ENCODE measurements at regions of chr4 and their contacts with region 1.

Region 1: DNA sequence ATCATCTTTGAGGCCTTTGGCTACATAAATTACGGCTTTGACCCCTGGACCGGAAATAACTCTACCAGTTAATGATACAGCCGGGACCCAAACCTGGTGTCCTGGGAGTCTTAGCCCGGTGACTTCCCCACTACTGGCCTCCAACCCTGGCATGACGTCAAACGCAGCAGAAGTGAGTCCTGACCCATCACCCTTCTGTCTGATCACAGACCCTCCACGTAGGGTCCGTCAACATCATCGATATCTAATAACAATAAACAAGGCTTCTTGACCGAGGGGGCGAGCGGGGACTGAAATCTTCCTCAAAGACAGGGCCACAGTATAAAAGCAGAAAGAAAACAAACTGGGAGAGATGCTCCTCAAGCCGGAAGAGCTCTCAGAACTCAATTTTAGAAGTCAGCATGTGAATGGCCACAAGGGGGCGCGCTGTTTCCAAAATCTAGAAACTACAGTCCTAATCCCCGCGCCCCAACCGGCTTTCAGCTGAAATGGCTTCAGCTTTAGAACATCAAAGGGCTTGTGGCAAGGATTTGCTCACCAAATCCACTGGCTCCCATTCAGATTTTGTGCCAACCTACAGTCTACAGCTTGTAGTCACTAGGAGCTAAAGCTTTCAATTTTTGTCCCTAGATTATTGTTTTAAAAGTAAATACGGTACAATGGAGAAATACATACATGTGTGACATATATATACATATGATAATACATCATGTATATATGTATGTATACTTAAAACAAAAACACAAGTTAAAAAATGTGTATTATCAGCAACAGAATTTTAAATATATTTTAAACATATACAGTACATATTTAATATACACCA is 46.4 kb upstream of the ENPP6 start:
- DNase-seq: peak; percentile 33
- H3K4me3 ChIP-seq: no peak overlapping the region
- CTCF ChIP-seq: peak; percentile 77

Region 2: GRCh38 chr4:184282251-184282713 is 18.2 kb after region 1 on chr4:
- CTCF ChIA-PET with region 1: interaction called, 27 read pairs
- POLR2A ChIA-PET with region 1: no interaction called
- DNase-seq: no peak
- H3K4me3 ChIP-seq: no peak overlapping the region
- CTCF ChIP-seq: no peak

Region 3: DNA sequence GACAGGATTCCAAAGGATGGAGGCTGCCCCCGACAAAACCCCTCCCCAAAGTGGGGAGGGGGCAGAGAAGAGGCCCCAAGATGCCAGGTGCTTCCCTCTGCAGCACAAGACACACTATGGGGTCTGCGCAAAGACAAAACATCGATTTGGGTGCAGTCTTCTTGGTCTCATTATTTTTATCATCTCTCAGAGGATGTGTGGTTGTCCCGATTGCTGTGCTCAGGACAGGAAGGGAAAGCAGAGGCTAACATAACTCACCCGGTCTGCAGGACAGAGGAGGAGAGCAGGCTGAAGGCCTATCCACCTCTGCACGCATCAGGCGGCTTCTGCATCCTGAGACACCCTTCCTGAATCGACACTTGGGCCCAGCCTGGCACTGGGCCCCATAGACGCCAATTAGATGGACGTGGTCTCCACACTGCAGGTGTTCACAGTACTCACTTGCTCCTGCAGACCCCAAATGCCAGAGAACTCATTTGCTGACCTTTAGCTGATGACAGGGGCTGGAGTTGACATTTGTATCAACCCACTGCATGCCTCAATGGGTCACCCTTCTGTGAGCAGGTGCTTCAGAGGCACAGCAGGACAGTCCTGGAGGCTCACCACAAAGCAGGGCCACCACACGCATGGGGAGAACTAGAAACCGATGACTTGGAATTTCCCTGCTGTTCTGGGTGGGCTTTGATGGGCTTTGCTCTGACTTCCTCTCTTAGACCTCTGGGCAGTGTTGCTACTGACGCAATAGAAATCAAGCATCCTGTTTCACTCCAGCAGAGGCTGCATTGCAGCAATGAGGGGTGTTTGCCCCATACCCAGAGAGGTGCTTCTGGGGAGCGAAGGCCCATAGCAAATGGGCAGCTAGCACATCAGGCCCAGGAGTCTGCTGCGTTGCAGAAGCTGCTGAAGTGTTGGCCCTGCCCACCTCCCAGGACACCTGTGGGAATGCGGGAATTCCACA is 49.9 kb after region 1 on chr4:
- CTCF ChIA-PET with region 1: no interaction called
- POLR2A ChIA-PET with region 1: no interaction called
- DNase-seq: no peak
- H3K4me3 ChIP-seq: no peak overlapping the region
- CTCF ChIP-seq: no peak

Region 4: GRCh38 chr4:184400375-184400870 is 136.3 kb after region 1 on chr4:
- CTCF ChIA-PET with region 1: interaction called, 10 read pairs
- POLR2A ChIA-PET with region 1: no interaction called
- DNase-seq: peak; percentile 82
- H3K4me3 ChIP-seq: no peak overlapping the region
- CTCF ChIP-seq: peak; percentile 52

Region 5: DNA sequence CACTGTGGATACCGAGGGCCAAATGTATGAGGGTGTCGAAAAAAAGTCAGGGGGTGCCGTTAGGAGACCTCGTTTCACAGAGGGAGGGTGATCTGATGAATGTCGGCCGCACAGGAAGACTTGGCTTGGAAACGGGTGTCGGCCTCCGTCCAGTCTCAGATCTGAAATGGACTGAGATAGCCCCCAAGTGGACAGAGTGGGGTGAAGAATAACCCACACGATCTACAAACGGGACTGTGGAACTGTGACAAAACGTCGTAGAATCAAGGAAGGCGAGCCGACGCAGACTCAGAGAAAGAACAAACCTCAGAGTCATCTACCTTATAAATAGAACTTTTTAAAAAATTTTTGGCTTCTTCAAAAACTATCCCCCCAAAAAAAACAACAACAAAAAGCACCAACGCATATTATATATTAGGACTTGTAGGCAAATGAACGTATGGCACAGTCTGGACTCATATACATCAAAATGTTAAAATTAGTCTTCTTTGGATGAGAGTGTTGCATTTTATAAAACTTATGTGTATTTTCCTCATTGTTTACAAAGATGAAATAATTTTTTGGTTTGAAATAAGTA is 274.0 kb after region 1 on chr4:
- CTCF ChIA-PET with region 1: interaction called, 59 read pairs
- POLR2A ChIA-PET with region 1: interaction called, 12 read pairs
- DNase-seq: peak; percentile 52
- H3K4me3 ChIP-seq: peak overlapping the region; percentile 65
- CTCF ChIP-seq: peak; percentile 64

Region 6: GRCh38 chr4:185096032-185096653 is 832.0 kb after region 1 on chr4:
- CTCF ChIA-PET with region 1: interaction called, 11 read pairs
- POLR2A ChIA-PET with region 1: no interaction called
- DNase-seq: no peak
- H3K4me3 ChIP-seq: no peak overlapping the region
- CTCF ChIP-seq: peak; percentile 38